ENCODE measurements at regions of chr5 and their contacts with region 1.

Region 1: GRCh38 chr5:135729321-135729786 is 105.1 kb upstream of the SLC25A48 start:
- DNase-seq: no peak
- H3K4me3 ChIP-seq: no peak overlapping the region
- H3K27ac ChIP-seq: no peak overlapping the region
- H3K4me1 ChIP-seq: no peaks in the 10 kb centered on the region
- H3K27me3 ChIP-seq: no peaks in the 10 kb centered on the region
- CTCF ChIP-seq: peak; percentile 36
- EP300 ChIP-seq: no peak
- RAD21 ChIP-seq: peak; percentile 44; the same call in 1 of the 2 replicates

Region 2: DNA sequence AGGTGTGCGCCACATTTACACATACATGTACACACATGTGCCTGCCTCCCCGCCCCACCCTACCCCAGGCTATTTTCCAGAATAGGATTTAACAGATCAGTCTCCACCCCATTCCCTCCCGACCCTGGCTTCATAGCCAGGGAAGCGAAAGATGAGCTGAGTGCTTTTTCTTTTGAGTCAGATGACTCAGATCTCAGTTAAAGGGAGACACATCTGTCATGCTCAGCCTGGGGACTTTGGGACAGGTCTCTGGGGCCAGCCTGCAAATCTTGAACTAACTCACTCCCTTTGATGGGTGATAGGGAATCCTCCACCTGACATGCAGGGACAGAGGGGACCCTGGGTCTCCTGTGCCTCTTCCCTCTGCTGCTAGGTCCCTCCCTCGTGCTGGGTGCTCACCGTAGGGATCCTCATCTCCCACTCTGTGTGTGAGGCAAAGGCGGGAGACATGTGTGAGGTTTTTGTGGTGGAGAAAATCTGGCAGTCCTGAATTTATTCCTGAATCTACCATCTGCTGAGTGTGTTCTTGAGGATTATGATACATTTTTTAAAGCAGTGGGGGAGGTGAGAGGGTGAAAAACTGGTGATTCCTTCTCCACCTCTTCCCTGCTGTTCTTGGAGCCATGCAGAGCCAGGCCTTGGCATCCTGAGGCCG is 231.3 kb before region 1 on chr5:
- CTCF ChIA-PET with region 1: no interaction called
- POLR2A ChIA-PET with region 1: no interaction called
- DNase-seq: no peak
- H3K4me3 ChIP-seq: no peak overlapping the region
- H3K27ac ChIP-seq: no peak overlapping the region
- H3K4me1 ChIP-seq: peaks cover 0 to 14% of the 10 kb centered on the region in 2 experiments; a peak in 2 of 4 replicates
- H3K27me3 ChIP-seq: no peaks in the 10 kb centered on the region; the same call in 1 of the 2 replicates
- CTCF ChIP-seq: no peak
- EP300 ChIP-seq: no peak
- RAD21 ChIP-seq: no peak

Region 3: DNA sequence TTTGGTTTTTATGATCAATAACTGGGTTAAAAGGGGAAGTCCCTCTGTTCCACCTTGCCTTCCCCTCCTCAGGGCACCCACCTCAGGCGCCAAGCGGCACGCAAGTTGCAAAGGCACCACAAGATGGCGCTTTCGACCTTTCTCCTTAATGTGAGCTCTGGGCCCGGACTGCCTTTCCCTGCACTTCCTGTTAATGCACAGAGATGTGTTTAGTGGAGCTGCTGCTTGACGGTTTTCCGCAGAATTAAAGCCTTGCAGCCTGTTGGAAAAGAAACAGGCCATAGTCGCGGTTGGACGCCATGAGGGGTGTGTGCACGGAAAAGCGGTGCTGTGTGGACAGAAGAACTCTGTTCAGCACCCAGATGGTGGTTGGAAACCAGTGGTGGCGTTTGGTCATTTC is 168.5 kb before region 1 on chr5:
- CTCF ChIA-PET with region 1: interaction called, 32 read pairs
- POLR2A ChIA-PET with region 1: no interaction called
- DNase-seq: peak; percentile 81
- H3K4me3 ChIP-seq: peak overlapping the region in 1 of 2 experiments; percentile 22; a peak in 1 of 4 replicates
- H3K27ac ChIP-seq: no peak overlapping the region
- H3K4me1 ChIP-seq: no peaks in the 10 kb centered on the region; a peak in 1 of 4 replicates
- H3K27me3 ChIP-seq: peaks cover 21% of the 10 kb centered on the region
- CTCF ChIP-seq: peak; percentile 84
- EP300 ChIP-seq: no peak
- RAD21 ChIP-seq: peak; percentile 85

Region 4: DNA sequence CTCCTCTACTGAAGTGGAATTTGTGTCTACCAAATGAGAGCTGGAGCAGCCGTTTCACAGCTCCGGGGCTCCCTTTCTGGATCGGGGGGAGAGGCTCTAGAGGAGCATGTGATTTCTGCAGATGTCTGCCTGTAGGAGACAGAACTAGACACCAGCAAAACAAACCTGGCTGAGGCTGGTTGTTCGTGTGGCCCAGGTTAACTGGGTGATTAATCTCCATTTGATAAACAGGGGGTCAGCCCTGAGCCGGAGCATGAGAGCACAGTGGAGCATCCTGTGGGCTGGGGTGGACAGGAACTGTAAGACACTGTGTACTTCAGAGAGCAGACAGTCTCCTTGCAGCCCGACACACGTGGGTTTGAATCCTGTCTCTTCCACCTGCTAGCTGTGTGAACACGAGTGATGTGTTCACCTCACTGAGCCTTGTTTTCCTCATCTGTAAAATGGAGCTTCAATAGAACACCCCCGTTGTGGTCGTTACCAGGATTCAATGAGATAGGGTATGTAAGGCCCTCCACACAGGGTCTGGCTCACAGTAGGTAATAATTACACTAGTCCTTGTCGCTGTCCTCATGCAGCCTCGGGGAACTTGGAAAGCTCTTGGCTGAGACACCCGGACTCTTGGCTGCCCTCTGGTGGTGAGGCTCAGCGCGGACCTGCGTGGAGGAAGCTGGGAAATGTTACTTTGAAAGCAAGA is 163.5 kb before region 1 on chr5:
- CTCF ChIA-PET with region 1: interaction called, 32 read pairs
- POLR2A ChIA-PET with region 1: no interaction called
- DNase-seq: peak; percentile 60
- H3K4me3 ChIP-seq: no peak overlapping the region; a peak in 1 of 4 replicates
- H3K27ac ChIP-seq: no peak overlapping the region
- H3K4me1 ChIP-seq: no peaks in the 10 kb centered on the region; a peak in 1 of 4 replicates
- H3K27me3 ChIP-seq: peaks cover 5% of the 10 kb centered on the region; the same call in 1 of the 2 replicates
- CTCF ChIP-seq: peak; percentile 83
- EP300 ChIP-seq: no peak
- RAD21 ChIP-seq: peak; percentile 29; the same call in 1 of the 2 replicates